ENCODE measurements at regions of chr7 and their contacts with region 1.

Region 1: GRCh38 chr7:107563775-107564552 is at the starts of genes COG5 and DUS4L:
- DNase-seq: peak; percentile 75
- H3K4me3 Mint-ChIP-seq: peak within 1 kb of the TSS; percentile 88
- H3K27ac Mint-ChIP-seq: peak within 1 kb of the TSS; percentile 99
- H3K4me1 Mint-ChIP-seq: peaks cover 42% of the 10 kb centered on the region
- H3K27me3 Mint-ChIP-seq: no peaks in the 10 kb centered on the region
- CTCF ChIP-seq: no peak
- total RNA-seq, gene COG5: 21.4 and 23.6 TPM in 2 replicates
- total RNA-seq, gene DUS4L: 9.3 and 9.9 TPM in 2 replicates

Region 2: DNA sequence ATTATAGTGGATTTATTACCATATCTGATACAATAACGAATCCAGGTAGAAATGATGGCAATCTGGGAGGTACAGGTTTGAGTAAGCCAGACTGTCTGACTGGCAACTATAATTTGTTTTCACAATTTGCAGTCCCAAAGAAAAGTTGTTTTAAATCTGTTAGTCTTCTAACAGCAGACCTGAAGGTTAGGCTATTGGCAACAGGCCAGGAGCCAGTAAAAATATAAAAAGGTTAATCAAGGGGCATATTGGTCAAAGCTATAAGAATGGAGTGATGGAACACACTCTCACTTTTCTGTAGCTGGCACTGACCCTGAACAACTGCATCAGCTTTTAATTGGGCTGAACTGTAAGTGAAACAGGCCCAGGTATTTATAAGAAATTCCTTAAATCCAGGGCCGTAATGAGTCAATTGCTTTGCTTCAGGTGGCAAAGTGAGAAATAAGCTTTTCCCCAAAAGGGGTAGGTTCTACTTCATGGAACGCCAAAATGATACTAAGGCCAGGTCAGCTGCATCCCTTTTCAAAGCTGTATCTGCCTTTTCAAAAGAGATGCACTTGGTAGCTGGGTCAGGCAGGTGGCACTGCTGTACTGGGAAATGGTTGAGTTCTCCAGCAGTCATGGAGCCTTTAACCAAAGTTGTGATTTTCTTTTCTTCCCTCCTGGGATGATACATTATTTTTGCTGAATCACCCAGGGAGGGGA is 101.1 kb before region 1 on chr7:
- CTCF ChIA-PET with region 1: interaction called, 3 read pairs
- intact Hi-C with region 1: loop called (anchors 5 kb)
- DNase-seq: peak; percentile 37
- H3K4me3 Mint-ChIP-seq: no peak overlapping the region
- H3K27ac Mint-ChIP-seq: no peak overlapping the region
- H3K4me1 Mint-ChIP-seq: no peaks in the 10 kb centered on the region
- H3K27me3 Mint-ChIP-seq: no peaks in the 10 kb centered on the region
- CTCF ChIP-seq: peak; percentile 25

Region 3: GRCh38 chr7:108063520-108063933 is 499.6 kb after region 1 on chr7:
- CTCF ChIA-PET with region 1: no interaction called
- intact Hi-C with region 1: no loop called
- DNase-seq: no peak
- H3K4me3 Mint-ChIP-seq: no peak overlapping the region
- H3K27ac Mint-ChIP-seq: no peak overlapping the region
- H3K4me1 Mint-ChIP-seq: no peaks in the 10 kb centered on the region
- H3K27me3 Mint-ChIP-seq: no peaks in the 10 kb centered on the region
- CTCF ChIP-seq: no peak

Measured in Calu3 (cell line).